ENCODE measurements at regions of chr16 and their contacts with region 1.

Region 1: DNA sequence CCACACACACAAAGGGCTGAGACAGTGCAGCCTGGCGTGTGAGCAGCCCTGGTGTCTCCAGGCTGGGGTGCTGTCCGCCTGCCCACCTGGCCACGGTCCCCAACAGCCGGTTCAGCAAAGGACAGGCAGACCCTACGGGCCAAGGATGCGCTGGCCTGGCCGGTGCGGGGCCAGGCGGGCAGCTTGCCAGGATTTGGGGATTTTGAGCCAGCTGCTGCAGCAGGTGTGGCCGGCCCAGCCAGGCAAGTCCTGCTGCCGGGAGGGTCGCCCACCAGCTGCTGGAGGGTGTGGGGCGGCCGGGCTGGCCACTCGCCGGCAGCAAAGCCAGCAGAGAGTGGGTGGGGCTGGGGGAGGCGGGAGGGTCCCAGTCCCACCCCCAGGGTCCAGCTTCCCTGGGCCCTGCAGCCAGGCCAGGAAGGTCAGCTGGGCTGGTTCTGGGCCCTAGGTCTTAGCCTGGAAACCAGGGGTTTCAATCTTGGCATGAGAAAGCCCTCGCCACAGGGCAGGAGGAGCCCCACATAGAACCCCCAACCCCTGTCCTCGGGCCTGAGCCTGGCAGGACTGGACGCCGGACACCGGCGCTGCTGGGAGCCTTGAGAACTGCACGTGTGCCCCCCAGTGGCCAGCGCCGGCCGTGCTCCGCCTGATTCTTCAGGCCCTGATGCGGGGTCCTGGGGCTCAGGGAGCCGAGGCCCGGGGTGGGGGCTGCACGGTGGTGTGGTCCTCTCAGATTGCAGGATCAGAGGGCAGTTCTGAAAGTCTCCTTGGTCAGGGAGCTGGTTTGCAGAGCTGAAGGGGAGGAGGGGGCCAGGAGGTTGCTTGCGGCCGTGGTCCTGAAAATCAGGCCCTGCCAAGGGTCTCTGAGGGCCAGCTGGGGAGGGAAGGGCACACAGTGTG is 17.6 kb upstream of the SSTR5 start:
- DNase-seq: peak; percentile 47 to 82 (median 72)
- H3K4me3 ChIP-seq: no peak overlapping the region
- H3K27ac ChIP-seq: no peak overlapping the region
- H3K4me1 ChIP-seq: no peaks in the 10 kb centered on the region
- H3K27me3 ChIP-seq: peaks cover 9% of the 10 kb centered on the region
- CTCF ChIP-seq: peak; percentile 61 to 87 (median 84)
- POLR2A ChIP-seq: no peak

Region 2: DNA sequence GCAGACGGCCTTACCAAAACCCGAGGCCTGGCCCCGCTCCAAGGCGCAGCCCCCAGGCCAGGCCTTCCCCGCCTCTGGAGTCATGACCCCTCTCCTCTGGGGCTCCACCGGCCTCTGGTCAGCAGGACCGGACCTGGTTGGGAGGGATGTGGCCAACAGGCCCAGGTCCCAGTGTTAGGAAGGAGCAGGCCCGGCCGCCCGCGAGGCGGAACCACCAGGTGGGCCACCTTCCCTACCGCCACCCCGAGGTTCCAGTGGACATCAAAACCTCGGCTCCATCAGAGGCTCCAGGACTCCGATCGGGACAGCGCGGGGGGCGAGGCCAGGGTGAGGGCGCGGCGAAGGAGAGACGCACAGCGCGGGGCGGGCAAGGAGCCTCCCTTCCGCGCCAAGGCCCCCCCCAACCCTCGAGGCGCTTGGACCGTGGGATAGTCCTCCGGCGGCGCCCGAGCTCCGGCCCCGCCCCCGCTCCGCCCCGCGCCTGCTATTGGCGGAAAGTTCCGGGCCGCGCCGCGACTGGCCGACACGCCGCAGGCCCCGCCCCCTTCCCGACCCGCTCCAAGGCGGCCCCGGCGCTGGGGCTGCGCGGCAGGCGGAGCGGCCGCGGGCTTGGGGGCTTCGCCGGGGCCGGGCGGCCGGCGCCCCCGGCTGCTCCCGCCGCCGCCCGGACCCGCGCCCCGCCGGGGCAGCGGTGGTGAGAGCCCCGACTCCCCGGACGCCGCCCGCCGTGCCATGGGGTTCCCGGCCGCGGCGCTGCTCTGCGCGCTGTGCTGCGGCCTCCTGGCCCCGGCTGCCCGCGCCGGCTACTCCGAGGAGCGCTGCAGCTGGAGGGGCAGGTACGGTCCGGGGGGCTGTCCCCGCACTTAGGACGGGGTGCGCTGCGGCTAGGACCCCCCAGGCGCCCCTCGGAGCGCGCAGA is 340.1 kb before region 1 on chr16 and contains the start of gene METRN:
- intact Hi-C with region 1: loop called (anchors 5 to 10 kb)
- DNase-seq: peak; percentile 87 to 95 (median 93)
- H3K4me3 ChIP-seq: peak within 1 kb of the TSS in 2 of 4 donors; percentile 37 to 76
- H3K27ac ChIP-seq: peak within 1 kb of the TSS in 3 of 5 donors; percentile 42 to 62 (median 56)
- H3K4me1 ChIP-seq: peaks cover 17 to 29% of the 10 kb centered on the region in 2 donors
- H3K27me3 ChIP-seq: peaks cover 6% of the 10 kb centered on the region
- CTCF ChIP-seq: no peak
- POLR2A ChIP-seq: peak in 1 of 2 donors; percentile 27
- total RNA-seq, gene METRN: 9.6 to 189 (median 58.6) TPM

Region 3: DNA sequence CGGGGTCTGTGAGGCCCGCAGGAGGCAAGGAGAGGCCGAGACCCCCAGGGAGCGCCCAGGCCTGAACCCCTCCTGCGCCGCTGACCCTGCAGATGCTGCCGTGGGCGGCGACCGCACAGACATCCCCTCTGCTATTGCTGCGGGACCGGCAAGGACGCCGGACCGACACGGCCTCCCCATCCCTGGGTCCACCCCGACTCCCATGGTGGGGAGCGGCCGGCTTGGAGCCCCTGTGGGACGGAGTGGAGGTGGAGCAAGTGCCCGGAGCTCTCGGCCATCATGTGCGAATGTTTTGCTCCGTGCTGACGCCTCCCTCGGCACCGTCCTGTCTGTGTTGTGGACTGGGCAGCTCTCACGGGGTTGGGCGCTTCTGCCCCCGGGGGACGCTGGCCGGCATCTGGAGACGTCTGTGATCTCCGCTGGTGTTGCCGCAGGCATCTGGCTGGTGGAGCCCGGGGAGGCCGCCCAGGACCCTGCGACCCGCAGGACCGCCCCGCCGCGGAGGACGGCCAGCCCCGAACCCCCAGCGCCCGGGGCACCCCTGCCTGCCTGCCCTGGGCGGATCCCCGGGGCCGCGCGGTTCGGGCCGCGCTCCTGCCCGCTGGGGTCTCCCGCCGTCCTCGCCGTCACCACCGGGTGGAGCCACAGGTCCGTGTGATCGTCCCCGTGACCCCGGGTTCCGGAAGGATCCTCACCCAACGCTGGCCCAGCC is 241.5 kb before region 1 on chr16:
- intact Hi-C with region 1: loop called (anchors 2 to 5 kb)
- DNase-seq: peak in 5 of 7 donors; percentile 50 to 62 (median 57)
- H3K4me3 ChIP-seq: peak overlapping the region in 1 of 4 donors; percentile 39
- H3K27ac ChIP-seq: no peak overlapping the region
- H3K4me1 ChIP-seq: peaks cover 0 to 5% of the 10 kb centered on the region in 2 donors
- H3K27me3 ChIP-seq: peaks cover 28% of the 10 kb centered on the region
- CTCF ChIP-seq: peak in 5 of 6 experiments; percentile 42 to 82 (median 57)
- POLR2A ChIP-seq: no peak

Region 4: GRCh38 chr16:1105888-1106620 is 51.1 kb after region 1 on chr16:
- intact Hi-C with region 1: loop called in 1 of 2 experiments (anchors 2 kb)
- DNase-seq: peak; percentile 67 to 87 (median 84)
- H3K4me3 ChIP-seq: no peak overlapping the region
- H3K27ac ChIP-seq: no peak overlapping the region
- H3K4me1 ChIP-seq: peaks cover 0 to 4% of the 10 kb centered on the region in 2 donors
- H3K27me3 ChIP-seq: peaks cover 12% of the 10 kb centered on the region
- CTCF ChIP-seq: peak; percentile 66 to 97 (median 82)
- POLR2A ChIP-seq: no peak